HepG2 (cell line): ENCODE measurements at regions of chr11 and their contacts with region 1.

Region 1: GRCh38 chr11:126591966-126592489 is 236.5 kb downstream of the ST3GAL4 start:
- DNase-seq: no peak
- ATAC-seq: no peak
- H3K4me3 ChIP-seq: no peak overlapping the region
- H3K27ac ChIP-seq: no peak overlapping the region
- H3K4me1 ChIP-seq: no peaks in the 10 kb centered on the region
- H3K27me3 ChIP-seq: peaks cover 2 to 44% of the 10 kb centered on the region in 2 experiments; a peak in 4 of 5 replicates
- CTCF ChIP-seq: no peak
- EP300 ChIP-seq: no peak
- POLR2A ChIP-seq: no peak
- RAD21 ChIP-seq: no peak

Region 2: GRCh38 chr11:126612671-126613070 is 20.6 kb after region 1 on chr11:
- CTCF ChIA-PET with region 1: no interaction called
- POLR2A ChIA-PET with region 1: no interaction called
- in situ Hi-C with region 1: no loop called
- intact Hi-C with region 1: loop called (anchors 1 kb)
- DNase-seq: no peak
- ATAC-seq: no peak
- H3K4me3 ChIP-seq: no peak overlapping the region
- H3K27ac ChIP-seq: no peak overlapping the region
- H3K4me1 ChIP-seq: no peaks in the 10 kb centered on the region
- H3K27me3 ChIP-seq: peaks cover 7 to 27% of the 10 kb centered on the region in 2 experiments; a peak in 3 of 5 replicates
- CTCF ChIP-seq: no peak
- EP300 ChIP-seq: no peak
- POLR2A ChIP-seq: no peak
- RAD21 ChIP-seq: no peak